ENCODE measurements at regions of chr4 and their contacts with region 1.

Region 1: DNA sequence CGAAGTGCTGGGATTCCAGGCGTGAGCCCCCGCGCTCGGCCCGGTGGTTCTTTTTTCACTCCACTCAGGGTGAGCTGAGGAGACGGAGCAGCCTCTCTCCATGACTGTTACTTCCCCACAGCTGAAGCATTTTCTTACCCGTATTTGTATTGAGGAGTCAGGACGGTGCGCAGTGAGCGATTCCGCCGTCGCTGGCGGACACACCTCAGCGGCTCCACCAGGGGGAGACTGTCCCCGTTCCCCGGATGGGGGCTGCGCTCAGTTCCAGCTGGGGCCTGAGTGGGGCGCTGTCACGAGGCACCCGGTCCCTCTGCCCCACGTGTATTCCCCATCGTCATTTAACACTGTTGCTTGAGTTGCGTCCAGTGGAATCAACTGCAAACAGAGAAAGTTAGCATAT is 844.0 kb upstream of the FRG1 start:
- DNase-seq: peak in 1 of 2 experiments; percentile 86
- H3K4me3 ChIP-seq: no peak overlapping the region
- H3K27ac ChIP-seq: no peak overlapping the region
- H3K4me1 ChIP-seq: no peaks in the 10 kb centered on the region
- H3K27me3 ChIP-seq: no peaks in the 10 kb centered on the region
- CTCF ChIP-seq: peak; percentile 87 to 99 (median 89)
- EP300 ChIP-seq: no peak
- POLR2A ChIP-seq: no peak
- RAD21 ChIP-seq: peak; percentile 69 to 80

Region 2: DNA sequence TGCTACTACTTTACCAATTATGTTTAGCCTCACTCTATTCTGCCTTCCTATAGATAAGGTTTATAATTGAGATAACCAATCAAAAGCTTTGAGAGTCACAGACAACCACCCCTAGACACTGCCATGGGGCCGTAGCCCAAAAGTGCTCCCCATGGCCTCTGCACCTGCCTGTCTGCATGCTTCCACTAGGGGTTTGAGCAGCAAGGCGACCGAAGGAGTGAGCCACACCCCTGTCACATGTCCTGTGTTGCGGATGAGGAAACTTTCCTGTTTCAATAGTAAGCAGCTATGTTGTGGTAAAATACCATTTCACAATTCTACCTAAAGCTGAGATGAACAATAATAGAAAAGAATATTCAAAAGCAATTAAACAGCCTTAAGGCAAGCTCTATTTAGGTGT is 12.0 kb before region 1 on chr4:
- CTCF ChIA-PET with region 1: interaction called, 17 read pairs
- POLR2A ChIA-PET with region 1: no interaction called
- DNase-seq: no peak
- H3K4me3 ChIP-seq: no peak overlapping the region
- H3K27ac ChIP-seq: no peak overlapping the region
- H3K4me1 ChIP-seq: peaks cover 0 to 2% (median 0%) of the 10 kb centered on the region in 4 experiments; a peak in 1 of 7 replicates
- H3K27me3 ChIP-seq: no peaks in the 10 kb centered on the region
- CTCF ChIP-seq: peak; percentile 33 to 64 (median 55)
- EP300 ChIP-seq: no peak
- POLR2A ChIP-seq: no peak
- RAD21 ChIP-seq: peak; percentile 18 to 46; a peak in 3 of 4 replicates

Region 3: GRCh38 chr4:189117426-189117825 is 20.7 kb after region 1 on chr4:
- CTCF ChIA-PET with region 1: interaction called, 21 read pairs
- POLR2A ChIA-PET with region 1: no interaction called
- DNase-seq: no peak
- H3K4me3 ChIP-seq: no peak overlapping the region
- H3K27ac ChIP-seq: no peak overlapping the region
- H3K4me1 ChIP-seq: no peaks in the 10 kb centered on the region
- H3K27me3 ChIP-seq: no peaks in the 10 kb centered on the region
- CTCF ChIP-seq: peak; percentile 0 to 29 (median 3); a peak in 3 of 4 replicates
- EP300 ChIP-seq: no peak
- POLR2A ChIP-seq: no peak
- RAD21 ChIP-seq: peak; percentile 50 to 58

Region 4: DNA sequence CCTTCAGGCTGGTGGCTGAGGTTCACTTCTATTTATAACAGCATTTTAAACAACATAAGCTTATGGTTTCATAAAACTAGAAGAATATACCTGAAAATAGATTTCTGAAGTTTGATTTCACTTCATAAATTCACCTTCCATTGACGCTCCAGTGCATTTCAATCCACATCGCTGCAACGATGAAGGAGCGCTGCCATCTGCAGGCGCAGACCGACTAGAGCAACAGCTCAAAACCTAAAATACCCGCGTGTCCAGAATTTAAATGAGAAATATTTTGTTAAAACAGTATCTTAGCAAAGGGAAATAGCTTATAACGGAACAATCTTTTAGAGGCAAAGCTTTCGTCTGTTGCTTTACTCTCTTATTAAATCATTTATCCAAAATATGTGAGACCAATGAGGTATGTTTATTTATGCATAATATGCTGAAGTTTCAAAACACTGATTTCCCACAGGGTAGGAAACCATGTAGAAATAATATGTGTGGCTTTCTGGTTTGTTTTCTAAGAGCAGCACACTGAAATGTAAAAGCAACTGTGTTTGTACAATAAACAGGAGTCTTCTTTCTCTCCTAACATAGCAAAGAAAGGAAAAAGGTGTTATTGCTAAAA is 27.5 kb after region 1 on chr4:
- CTCF ChIA-PET with region 1: interaction called, 15 read pairs
- POLR2A ChIA-PET with region 1: no interaction called
- DNase-seq: no peak
- H3K4me3 ChIP-seq: no peak overlapping the region
- H3K27ac ChIP-seq: no peak overlapping the region
- H3K4me1 ChIP-seq: no peaks in the 10 kb centered on the region
- H3K27me3 ChIP-seq: no peaks in the 10 kb centered on the region
- CTCF ChIP-seq: peak; percentile 61 to 72 (median 69)
- EP300 ChIP-seq: no peak
- POLR2A ChIP-seq: no peak
- RAD21 ChIP-seq: peak; percentile 89 to 92

Region 5: GRCh38 chr4:189221691-189222090 is 125.0 kb after region 1 on chr4:
- CTCF ChIA-PET with region 1: no interaction called
- POLR2A ChIA-PET with region 1: no interaction called
- DNase-seq: no peak
- H3K4me3 ChIP-seq: no peak overlapping the region
- H3K27ac ChIP-seq: no peak overlapping the region
- H3K4me1 ChIP-seq: no peaks in the 10 kb centered on the region
- H3K27me3 ChIP-seq: no peaks in the 10 kb centered on the region
- CTCF ChIP-seq: no peak
- EP300 ChIP-seq: no peak
- POLR2A ChIP-seq: no peak
- RAD21 ChIP-seq: no peak

Measured in H1 (cell line).